ENCODE measurements at regions of chr10 and their contacts with region 1.

Region 1: DNA sequence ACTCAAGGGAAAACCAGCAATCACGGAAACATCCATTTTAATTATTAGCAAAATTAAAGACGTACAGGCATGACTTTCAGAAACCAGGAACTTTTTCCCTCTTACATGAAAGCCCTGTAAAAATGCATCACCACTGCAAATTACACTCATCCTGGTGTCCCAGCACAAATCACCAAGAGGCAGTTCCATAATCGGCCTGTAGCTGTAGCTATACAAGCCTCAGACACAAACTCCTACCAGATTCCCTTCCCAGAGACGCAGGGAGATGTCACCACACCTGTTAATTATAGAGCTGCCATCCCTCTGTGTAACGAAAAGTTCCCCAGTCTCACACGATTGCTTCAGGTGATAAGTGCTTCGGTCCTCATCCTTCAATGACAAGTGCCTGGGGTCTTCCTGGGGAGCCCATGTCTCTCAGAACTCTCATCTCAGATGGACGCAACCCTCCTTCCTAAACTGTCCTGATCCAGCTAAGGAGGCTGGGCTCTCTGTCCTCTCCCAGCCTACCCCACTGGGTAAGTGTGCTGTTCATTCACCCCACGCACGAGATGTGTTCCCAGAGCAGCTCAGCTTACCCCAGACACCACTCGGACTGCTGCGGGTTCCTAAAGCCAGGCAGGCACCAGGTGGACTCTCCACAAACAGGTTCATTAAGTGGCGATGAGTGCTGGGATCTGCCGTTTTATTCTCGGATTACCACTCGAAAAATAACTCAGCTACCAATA is 5.9 kb downstream of the FGFR2 start:
- DNase-seq: no peak
- H3K4me3 ChIP-seq: peak overlapping the region; percentile 1 to 7 (median 3)
- H3K27ac ChIP-seq: peak overlapping the region; percentile 91 to 95 (median 94)
- H3K4me1 ChIP-seq: peaks cover 5 to 78% (median 73%) of the 10 kb centered on the region in 4 donors
- H3K27me3 ChIP-seq: peaks cover 0 to 17% (median 2%) of the 10 kb centered on the region in 4 donors
- CTCF ChIP-seq: peak in 2 of 3 experiments; percentile 28 to 59
- EP300 ChIP-seq: no peak
- POLR2A ChIP-seq: no peak

Region 2: GRCh38 chr10:121524157-121524817 is 68.0 kb before region 1 on chr10:
- intact Hi-C with region 1: loop called (anchors 5 kb)
- DNase-seq: no peak
- H3K4me3 ChIP-seq: peak overlapping the region in 2 of 4 donors; percentile 20 to 22
- H3K27ac ChIP-seq: peak overlapping the region; percentile 71 to 83 (median 76)
- H3K4me1 ChIP-seq: peaks cover 0 to 80% (median 61%) of the 10 kb centered on the region in 4 donors
- H3K27me3 ChIP-seq: no peaks in the 10 kb centered on the region
- CTCF ChIP-seq: no peak
- EP300 ChIP-seq: no peak
- POLR2A ChIP-seq: no peak

Region 3: GRCh38 chr10:121880895-121881294 is 288.6 kb after region 1 on chr10:
- intact Hi-C with region 1: no loop called
- DNase-seq: no peak
- H3K4me3 ChIP-seq: no peak overlapping the region
- H3K27ac ChIP-seq: no peak overlapping the region
- H3K4me1 ChIP-seq: peaks cover 0 to 9% (median 0%) of the 10 kb centered on the region in 4 donors
- H3K27me3 ChIP-seq: no peaks in the 10 kb centered on the region
- CTCF ChIP-seq: no peak
- EP300 ChIP-seq: no peak
- POLR2A ChIP-seq: no peak

Measured in esophagus muscularis mucosa (tissue), 4 donors.